Head of caudate nucleus (tissue), 42 donors: ENCODE measurements at regions of chr11 and their contacts with region 1.

Region 1: GRCh38 chr11:7513234-7514098 is at the start of gene PPFIBP2:
- DNase-seq: peak; percentile 64 to 94 (median 87)

Region 2: DNA sequence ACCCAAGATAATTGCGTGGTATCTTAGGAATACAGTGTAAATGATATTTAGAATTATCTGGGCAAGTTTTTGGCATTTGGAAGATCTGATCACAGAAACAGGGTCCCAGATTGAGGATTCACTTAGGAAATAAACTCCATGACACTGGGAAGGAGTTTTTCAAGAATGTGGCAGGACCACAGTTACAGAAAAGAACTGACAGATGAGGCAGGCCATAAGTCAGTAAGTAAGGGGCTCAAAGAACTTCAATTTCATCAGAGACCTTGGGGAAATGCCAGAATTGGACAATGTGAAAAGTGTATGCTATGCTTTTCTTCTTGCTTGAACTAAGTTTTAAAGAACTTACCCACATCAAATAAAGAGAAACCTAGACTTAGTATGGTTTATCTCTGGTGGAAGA is 375.4 kb before region 1 on chr11:
- intact Hi-C with region 1: no loop called
- DNase-seq: no peak

Region 3: DNA sequence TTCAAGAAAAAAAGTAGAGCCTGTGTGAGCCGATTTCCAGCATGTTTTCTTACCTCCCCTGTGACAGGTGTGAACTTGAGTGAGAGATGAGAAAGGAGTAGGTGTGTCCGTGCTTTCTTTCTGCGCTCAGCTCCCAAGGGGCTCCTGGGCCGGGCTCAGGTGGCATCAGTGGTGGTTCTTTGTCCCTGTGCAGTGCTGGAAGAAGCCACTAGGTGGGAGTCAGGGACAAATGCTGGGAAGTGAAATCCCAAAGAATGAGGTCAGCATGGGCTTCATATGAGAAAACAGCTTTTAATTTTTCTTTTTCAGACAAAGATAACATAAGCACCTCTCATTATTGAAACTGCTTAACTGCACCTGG is 58.2 kb after region 1 on chr11:
- intact Hi-C with region 1: loop called (anchors 2 kb)
- DNase-seq: peak; percentile 51 to 93 (median 79)

Region 4: GRCh38 chr11:7651140-7651551 is 137.7 kb after region 1 on chr11:
- intact Hi-C with region 1: loop called (anchors 5 kb)
- DNase-seq: peak in 31 of 42 donors; percentile 32 to 83 (median 60)

Region 5: GRCh38 chr11:7665473-7666291 is 152.2 kb after region 1 on chr11:
- intact Hi-C with region 1: loop called (anchors 5 kb)
- DNase-seq: peak in 40 of 42 donors; percentile 51 to 88 (median 74)

Region 6: DNA sequence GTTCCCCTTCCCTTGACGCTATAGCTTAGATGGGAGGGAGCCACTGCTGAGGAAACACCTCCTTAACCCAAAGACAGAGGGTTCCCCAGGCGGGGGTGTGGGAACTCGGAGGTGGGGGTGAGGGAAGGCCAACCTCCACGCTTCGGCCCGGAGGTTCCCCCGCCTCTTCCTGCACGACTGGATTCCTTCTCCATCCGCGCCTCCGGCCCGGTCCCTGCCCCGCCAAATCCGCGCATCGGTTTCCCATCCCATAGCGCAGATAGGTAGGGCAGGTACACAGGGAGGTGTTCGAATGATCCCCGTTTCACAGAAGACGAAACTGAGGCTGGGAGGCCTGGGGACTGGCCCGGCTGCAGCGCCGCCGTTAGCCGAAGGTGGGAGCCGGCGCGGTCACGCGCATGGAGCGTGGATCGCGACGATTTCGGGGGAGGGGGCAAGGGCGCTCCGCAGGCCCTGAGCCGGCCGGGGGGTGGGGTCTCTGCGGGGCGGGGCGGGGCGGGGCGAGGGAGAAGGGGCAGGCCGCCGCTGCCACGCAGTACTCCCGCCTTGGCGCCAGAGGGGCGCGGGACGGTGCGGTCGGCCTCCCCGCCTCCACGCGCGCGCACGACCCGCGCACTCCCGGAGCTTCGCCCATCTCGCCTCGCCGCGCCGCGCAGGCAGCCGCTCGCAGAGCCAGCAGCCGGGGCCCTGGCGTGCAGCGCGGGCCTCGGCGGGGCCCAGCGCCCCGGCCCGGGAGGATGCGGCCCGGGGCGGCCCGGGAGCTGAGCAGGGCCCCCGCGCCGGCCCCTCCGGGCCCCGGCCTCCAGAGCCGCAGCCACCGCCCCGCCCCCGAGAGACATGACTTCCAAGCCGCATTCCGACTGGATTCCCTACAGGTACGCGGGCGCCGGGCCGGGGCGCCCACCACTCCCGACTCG is 567.5 kb after region 1 on chr11 and contains the start of gene TUB:
- intact Hi-C with region 1: no loop called
- DNase-seq: peak in 30 of 42 donors; percentile 11 to 67 (median 47)